ENCODE measurements at regions of chr1 and their contacts with region 1.

Region 1: GRCh38 chr1:182910143-182910542 is 42.8 kb downstream of the SHCBP1L start:
- DNase-seq: no peak
- H3K4me3 ChIP-seq: no peak overlapping the region
- H3K27ac ChIP-seq: no peak overlapping the region
- H3K4me1 ChIP-seq: no peaks in the 10 kb centered on the region
- H3K27me3 ChIP-seq: no peaks in the 10 kb centered on the region
- CTCF ChIP-seq: no peak

Region 2: GRCh38 chr1:182889997-182890396 is 20.1 kb before region 1 on chr1:
- CTCF ChIA-PET with region 1: no interaction called
- POLR2A ChIA-PET with region 1: no interaction called
- intact Hi-C with region 1: loop called (anchors 1 kb)
- DNase-seq: no peak
- H3K4me3 ChIP-seq: no peak overlapping the region
- H3K27ac ChIP-seq: no peak overlapping the region
- H3K4me1 ChIP-seq: no peaks in the 10 kb centered on the region
- H3K27me3 ChIP-seq: no peaks in the 10 kb centered on the region
- CTCF ChIP-seq: no peak

Region 3: DNA sequence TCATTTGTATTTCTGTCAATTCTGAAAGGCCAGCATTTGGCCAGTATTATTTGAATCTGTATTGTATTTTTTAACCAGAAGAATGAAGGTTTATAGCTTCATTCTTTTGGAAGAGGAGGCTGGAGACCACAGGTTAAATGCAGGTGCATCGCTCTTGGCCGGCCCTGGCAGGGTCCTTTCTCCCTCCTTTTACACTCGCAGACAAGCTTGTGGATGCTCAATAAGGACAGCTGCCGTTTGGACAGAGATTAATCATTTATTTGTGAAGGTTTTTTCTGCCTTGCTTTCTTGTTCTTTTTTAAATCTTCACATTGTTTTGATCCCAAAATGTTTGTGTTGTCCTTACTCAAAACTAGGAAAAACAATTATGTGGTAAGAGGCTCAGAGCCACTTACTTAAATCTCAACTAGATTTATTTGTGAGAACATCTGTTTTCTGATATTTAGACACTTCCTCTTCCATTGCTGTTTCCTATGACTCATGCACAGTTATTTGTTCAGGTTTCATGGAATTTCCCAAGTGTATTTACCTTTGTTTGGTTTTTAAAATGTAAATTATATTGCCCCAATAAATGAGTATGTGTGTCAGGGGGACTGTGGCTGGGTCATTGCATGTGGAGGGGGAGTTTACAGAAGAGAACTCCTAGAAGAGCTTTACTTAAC is 229.3 kb after region 1 on chr1:
- CTCF ChIA-PET with region 1: no interaction called
- POLR2A ChIA-PET with region 1: no interaction called
- intact Hi-C with region 1: no loop called
- DNase-seq: peak; percentile 42
- H3K4me3 ChIP-seq: no peak overlapping the region
- H3K27ac ChIP-seq: no peak overlapping the region
- H3K4me1 ChIP-seq: peaks cover 8% of the 10 kb centered on the region
- H3K27me3 ChIP-seq: no peaks in the 10 kb centered on the region
- CTCF ChIP-seq: no peak

Region 4: DNA sequence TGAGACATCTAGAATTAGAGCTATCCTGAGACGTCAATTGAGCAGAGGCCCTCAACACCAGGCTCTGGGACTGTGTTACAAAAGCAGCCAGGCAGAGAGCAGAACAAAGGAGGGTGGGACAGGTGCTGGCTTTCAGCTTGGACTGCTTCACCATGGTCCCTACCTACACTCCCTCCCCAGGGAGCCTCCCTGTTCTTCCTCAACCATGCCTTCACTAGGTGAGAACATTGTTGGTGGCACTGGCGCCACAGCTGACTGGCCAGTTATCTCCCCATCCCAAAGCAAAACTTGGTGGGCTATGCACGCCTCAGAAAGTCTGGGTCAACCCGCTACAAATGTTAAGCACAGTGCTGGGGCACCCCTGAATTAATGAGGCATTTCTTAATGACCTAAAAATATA is 420.2 kb after region 1 on chr1:
- CTCF ChIA-PET with region 1: no interaction called
- POLR2A ChIA-PET with region 1: interaction called, 14 read pairs
- intact Hi-C with region 1: no loop called
- DNase-seq: no peak
- H3K4me3 ChIP-seq: no peak overlapping the region
- H3K27ac ChIP-seq: no peak overlapping the region
- H3K4me1 ChIP-seq: no peaks in the 10 kb centered on the region
- H3K27me3 ChIP-seq: no peaks in the 10 kb centered on the region
- CTCF ChIP-seq: no peak